Activated T-helper 1 cell treated with anti-CD3 and anti-CD28 coated beads, Interleukin-12 subunit alpha, Interleukin-12 subunit beta, Interleukin-2, Interleukin-4 antibody, amounts not matched to agents 30 ng/mL and 10 ng/mL and 1 ng/mL, durations not matched to agents 14 hours and 24 hours and 36 hours (primary cell): ENCODE measurements at regions of chr19 and their contacts with region 1.

Region 1: DNA sequence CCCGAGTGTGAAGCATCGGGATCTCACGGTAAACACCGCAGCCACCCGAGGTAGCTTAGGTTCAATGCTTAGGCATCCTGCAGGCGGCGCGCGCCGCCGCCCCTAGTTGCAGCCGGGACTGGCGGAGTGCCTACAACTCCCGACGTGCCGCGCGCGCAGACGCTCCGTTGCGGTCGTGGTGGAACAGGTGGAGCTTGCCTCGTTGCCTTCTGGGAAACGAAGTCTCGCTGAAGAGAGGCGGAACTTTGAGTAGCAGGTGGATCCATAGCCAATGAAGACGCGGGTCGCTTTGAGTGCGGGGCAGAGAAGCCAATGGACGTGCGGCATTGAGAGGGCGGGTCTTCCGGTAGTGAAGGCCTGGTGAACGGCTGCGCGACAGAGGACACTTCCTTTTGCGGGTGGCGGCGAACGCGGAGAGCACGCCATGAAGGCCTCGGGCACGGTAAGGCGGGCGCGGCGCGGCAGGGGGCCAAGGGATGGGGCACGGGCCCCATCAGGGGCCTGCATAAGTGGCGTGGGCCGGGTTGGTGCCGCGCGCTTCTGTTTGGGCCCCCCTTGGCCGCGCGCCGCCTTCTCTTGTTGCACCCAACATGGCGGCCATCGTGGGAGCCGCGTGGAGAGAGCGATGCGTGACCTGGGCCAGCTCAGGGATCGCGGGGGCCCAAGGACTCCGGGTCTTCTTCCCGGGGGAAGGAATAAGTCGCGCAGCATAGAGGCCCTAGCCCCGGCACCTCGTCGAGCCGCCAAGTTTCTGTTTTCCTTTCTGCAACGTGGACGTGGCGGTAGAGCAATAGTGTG is at the start of gene RPL18A:
- DNase-seq: peak; percentile 99
- H3K4me3 Mint-ChIP-seq: peak within 1 kb of the TSS; percentile 99
- H3K27ac Mint-ChIP-seq: peak within 1 kb of the TSS; percentile 100
- H3K4me1 Mint-ChIP-seq: peaks cover 31% of the 10 kb centered on the region
- H3K27me3 Mint-ChIP-seq: peaks cover 1% of the 10 kb centered on the region
- total RNA-seq, gene RPL18A: 2,494 and 2,556 TPM in 2 replicates

Region 2: GRCh38 chr19:17448131-17448967 is 411.4 kb before region 1 on chr19 and contains the start of gene TMEM221:
- intact Hi-C with region 1: loop called (anchors 5 kb)
- DNase-seq: peak; percentile 28
- H3K4me3 Mint-ChIP-seq: no peak within 1 kb of the TSS
- H3K27ac Mint-ChIP-seq: no peak within 1 kb of the TSS
- H3K4me1 Mint-ChIP-seq: peaks cover 13% of the 10 kb centered on the region
- H3K27me3 Mint-ChIP-seq: peaks cover 14% of the 10 kb centered on the region
- total RNA-seq, gene TMEM221: not detected in 2 replicates

Region 3: GRCh38 chr19:17703824-17704463 is 155.8 kb before region 1 on chr19:
- intact Hi-C with region 1: loop called (anchors 1 kb)
- DNase-seq: peak; percentile 50
- H3K4me3 Mint-ChIP-seq: no peak overlapping the region
- H3K27ac Mint-ChIP-seq: no peak overlapping the region
- H3K4me1 Mint-ChIP-seq: no peaks in the 10 kb centered on the region
- H3K27me3 Mint-ChIP-seq: peaks cover 2% of the 10 kb centered on the region

Region 4: DNA sequence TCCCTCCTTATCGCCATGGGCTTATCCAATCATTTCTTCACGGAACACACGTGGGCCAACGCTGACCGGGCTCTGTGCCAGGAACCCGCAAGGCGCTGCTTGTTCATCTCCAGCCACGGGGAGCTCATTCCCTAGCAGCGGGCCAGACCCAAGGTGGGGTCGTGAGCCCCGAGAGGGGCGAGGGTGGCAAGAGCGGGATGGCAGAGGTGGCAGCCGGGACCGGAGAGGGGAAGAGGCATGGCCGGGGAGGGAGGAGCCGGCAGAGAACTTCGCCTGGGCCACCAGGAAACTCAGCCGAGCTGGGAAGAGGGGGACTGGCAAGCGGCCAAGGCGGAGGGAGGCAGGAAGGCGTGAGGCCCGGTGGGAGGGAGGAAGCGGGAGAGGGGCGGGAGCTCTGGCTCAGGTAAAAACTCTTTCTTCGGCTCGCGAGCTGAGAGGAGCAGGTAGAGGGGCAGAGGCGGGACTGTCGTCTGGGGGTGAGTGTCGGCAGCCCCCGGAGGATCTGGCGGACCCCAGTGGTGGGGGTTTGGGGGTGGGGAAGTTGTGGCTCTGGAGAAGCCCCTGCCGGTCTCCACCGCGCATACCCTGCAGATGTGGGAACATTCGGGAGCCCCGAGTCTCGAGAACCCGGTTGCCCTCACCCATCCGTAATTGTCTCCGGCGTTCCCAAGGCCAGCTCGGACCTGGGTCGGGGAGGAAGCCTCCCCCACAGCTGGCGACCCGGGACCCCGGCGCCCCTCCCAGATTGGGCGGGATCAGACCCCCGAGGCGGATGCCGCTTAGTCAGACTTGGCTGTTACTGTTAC is 64.8 kb before region 1 on chr19 and contains the start of gene B3GNT3:
- intact Hi-C with region 1: loop called (anchors 5 kb)
- DNase-seq: no peak
- H3K4me3 Mint-ChIP-seq: peak within 1 kb of the TSS; percentile 42
- H3K27ac Mint-ChIP-seq: peak within 1 kb of the TSS; percentile 63
- H3K4me1 Mint-ChIP-seq: peaks cover 40% of the 10 kb centered on the region
- H3K27me3 Mint-ChIP-seq: peaks cover 17% of the 10 kb centered on the region
- total RNA-seq, gene B3GNT3: not detected in 2 replicates

Region 5: GRCh38 chr19:17841371-17841809 is 18.3 kb before region 1 on chr19:
- intact Hi-C with region 1: no loop called
- DNase-seq: no peak
- H3K4me3 Mint-ChIP-seq: no peak overlapping the region
- H3K27ac Mint-ChIP-seq: no peak overlapping the region
- H3K4me1 Mint-ChIP-seq: peaks cover 42% of the 10 kb centered on the region
- H3K27me3 Mint-ChIP-seq: no peaks in the 10 kb centered on the region

Region 6: GRCh38 chr19:17873786-17874757 is 14.3 kb after region 1 on chr19:
- intact Hi-C with region 1: loop called (anchors 1 kb)
- DNase-seq: peak; percentile 50
- H3K4me3 Mint-ChIP-seq: peak overlapping the region; percentile 86
- H3K27ac Mint-ChIP-seq: no peak overlapping the region
- H3K4me1 Mint-ChIP-seq: peaks cover 4% of the 10 kb centered on the region
- H3K27me3 Mint-ChIP-seq: no peaks in the 10 kb centered on the region